ENCODE measurements at regions of chr16 and their contacts with region 1.

Region 1: DNA sequence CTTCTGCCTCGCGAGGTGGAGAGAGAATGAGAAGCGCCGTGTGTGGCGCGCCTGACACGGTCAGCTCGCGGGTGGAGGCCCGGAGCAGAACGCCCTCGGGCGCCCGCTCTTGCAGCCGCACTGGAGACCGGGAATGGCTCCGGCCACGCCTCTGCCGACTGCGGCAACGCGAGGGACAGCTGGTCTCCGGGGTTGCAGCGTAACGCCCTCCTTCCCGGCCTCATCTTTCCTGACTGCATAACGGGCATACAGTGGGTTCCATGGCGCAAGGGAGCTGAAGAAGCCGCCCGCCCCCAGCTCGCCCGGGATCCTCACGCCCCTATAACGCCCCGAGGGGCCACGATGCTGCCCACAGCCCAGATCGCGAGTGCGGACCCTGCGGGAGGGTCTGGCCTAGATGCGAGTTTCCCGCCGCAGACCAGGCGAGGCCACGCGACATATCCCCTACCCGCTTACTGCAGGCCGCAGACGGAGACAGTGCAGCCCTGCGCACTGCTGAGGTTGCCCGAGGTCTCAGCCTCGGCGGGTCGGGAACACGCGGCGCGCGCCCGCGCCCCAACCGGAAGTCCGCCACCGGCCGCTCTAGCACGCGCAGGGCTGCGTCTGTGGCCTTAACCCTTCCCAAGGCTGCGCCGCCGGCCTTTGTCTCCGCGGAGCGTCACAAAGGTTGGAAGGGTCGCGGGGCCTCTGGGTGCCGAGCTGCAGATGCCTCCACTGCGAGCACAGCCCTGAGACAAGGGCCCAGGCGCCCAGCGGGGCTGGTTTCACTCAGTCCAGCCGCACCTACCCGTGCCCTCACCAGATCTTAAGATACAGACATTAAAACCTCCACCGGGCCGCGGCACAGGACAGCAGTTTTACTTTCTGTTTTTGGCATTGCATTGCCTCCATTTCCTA is 18.8 kb downstream of the BCL7C start:
- DNase-seq: peak; percentile 91

Region 2: DNA sequence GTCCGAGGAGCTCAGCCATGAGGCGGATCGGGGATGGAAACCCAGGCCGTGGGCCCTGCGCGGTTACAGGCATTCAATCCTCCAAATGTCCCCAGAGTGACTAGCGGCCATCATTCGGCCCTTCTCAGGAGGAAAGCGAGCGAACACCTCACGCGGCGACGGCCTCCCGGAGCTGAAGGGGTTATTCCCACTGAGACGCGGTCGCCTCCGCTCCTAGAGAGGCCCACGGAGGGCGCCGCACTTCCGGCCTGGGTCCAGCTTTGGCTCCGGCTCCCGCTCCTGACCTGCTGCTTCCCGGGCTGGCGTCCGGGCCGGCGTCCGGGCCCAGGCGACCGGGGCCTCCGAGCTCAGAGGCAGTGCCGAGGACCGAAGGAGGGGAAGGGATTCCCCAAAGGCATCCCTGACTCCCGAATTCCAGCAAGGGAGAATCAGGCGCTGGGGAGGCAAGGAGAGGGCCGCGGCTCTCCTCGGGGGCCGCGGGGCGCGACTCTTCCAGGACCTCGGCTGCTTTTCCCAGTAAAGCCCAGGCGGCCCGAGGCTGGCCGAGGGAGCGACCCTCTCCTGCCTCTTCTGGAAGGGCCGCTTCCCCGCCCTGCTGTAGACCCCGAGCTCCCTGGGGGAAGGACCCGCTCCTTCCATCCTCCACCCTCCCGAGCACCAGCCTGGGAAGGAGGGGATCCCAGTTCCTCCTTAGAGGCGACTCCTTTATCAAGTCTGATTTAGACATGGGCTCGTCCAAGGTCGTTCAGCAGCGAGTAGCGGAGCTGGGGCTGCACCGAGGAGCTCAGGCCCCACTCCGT is 69.5 kb before region 1 on chr16:
- in situ Hi-C with region 1: loop called (anchors 10 kb)
- DNase-seq: peak; percentile 86